Naive thymus-derived CD4-positive, alpha-beta T cell (primary cell): ENCODE measurements at regions of chr12 and their contacts with region 1.

Region 1: DNA sequence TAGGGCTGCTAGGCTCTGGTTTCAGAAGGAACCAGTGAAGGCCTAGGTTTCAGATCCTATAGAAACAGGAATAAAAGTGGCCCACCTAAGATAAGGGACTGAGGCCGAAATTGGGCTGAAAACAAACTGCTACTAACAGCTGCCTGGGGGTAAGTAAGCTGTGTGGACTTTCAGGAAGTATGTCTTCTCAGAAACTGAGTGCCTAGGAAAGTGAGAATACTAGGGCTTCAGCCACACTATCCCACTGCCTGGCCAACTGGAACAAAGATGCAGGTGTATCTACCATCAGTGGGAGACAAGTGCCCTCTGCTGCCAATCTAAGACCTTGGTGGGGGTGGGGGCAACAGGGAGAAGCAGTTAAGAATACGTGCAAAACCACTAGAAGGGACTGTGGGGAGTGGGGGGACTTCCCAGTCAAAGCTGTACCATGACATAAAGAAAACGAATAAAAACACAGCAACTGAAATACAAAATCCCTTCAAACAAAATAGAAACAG is 82.5 kb downstream of the MED13L start:
- DNase-seq: peak; percentile 18 to 86 (median 57)
- ATAC-seq: peak; percentile 95
- H3K4me3 ChIP-seq: no peak overlapping the region
- H3K4me3 Mint-ChIP-seq: peak overlapping the region in 9 of 10 donors; percentile 18 to 62 (median 49)
- H3K27ac ChIP-seq: no peak overlapping the region
- H3K27ac Mint-ChIP-seq: peak overlapping the region; percentile 42 to 78 (median 66)
- H3K4me1 ChIP-seq: peaks cover 7 to 25% of the 10 kb centered on the region in 2 donors
- H3K4me1 Mint-ChIP-seq: peaks cover 34 to 89% (median 73%) of the 10 kb centered on the region in 7 donors
- H3K27me3 ChIP-seq: no peaks in the 10 kb centered on the region
- H3K27me3 Mint-ChIP-seq: no peaks in the 10 kb centered on the region

Region 2: GRCh38 chr12:116015525-116015924 is 179.5 kb before region 1 on chr12:
- CTCF ChIA-PET with region 1: no interaction called
- POLR2A ChIA-PET with region 1: no interaction called
- intact Hi-C with region 1: loop called in 1 of 2 experiments (anchors 5 kb)
- DNase-seq: peak in 4 of 9 donors; percentile 5 to 19 (median 14)
- ATAC-seq: peak; percentile 57
- H3K4me3 ChIP-seq: no peak overlapping the region
- H3K4me3 Mint-ChIP-seq: no peak overlapping the region
- H3K27ac ChIP-seq: no peak overlapping the region
- H3K27ac Mint-ChIP-seq: peak overlapping the region in 5 of 9 donors; percentile 8 to 68 (median 45)
- H3K4me1 ChIP-seq: no peaks in the 10 kb centered on the region
- H3K4me1 Mint-ChIP-seq: peaks cover 0 to 5% (median 4%) of the 10 kb centered on the region in 7 donors
- H3K27me3 ChIP-seq: no peaks in the 10 kb centered on the region
- H3K27me3 Mint-ChIP-seq: no peaks in the 10 kb centered on the region

Region 3: GRCh38 chr12:116066381-116067230 is 128.4 kb before region 1 on chr12:
- CTCF ChIA-PET with region 1: no interaction called
- POLR2A ChIA-PET with region 1: no interaction called
- intact Hi-C with region 1: loop called in 1 of 2 experiments (anchors 2 kb)
- DNase-seq: peak; percentile 18 to 58 (median 49)
- ATAC-seq: peak; percentile 87
- H3K4me3 ChIP-seq: no peak overlapping the region
- H3K4me3 Mint-ChIP-seq: peak overlapping the region in 1 of 10 donors; percentile 14
- H3K27ac ChIP-seq: no peak overlapping the region
- H3K27ac Mint-ChIP-seq: peak overlapping the region in 4 of 9 donors; percentile 3 to 80 (median 10)
- H3K4me1 ChIP-seq: no peaks in the 10 kb centered on the region
- H3K4me1 Mint-ChIP-seq: peaks cover 22 to 72% (median 55%) of the 10 kb centered on the region in 7 donors
- H3K27me3 ChIP-seq: no peaks in the 10 kb centered on the region
- H3K27me3 Mint-ChIP-seq: no peaks in the 10 kb centered on the region

Region 4: DNA sequence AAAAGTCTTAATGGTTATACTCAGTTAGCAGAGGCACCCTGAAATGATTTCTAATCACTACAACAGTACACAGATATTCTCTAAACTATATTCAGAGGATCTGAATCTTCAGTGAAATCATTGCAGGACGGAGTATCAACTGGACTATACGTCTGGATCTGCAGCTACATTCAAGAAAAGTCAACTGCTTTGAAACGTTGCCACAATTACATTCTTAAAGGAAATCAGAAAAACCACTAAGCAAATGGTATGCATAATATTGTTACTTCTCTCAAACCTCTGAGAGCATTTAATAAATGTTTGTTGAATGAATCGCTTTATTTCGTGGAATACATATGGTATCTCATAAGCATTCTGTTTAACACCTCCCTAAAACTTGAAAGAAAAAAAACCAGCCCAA is 15.1 kb after region 1 on chr12:
- CTCF ChIA-PET with region 1: no interaction called
- POLR2A ChIA-PET with region 1: no interaction called
- intact Hi-C with region 1: loop called in 1 of 2 experiments (anchors 2 kb)
- DNase-seq: no peak
- ATAC-seq: no peak
- H3K4me3 ChIP-seq: no peak overlapping the region
- H3K4me3 Mint-ChIP-seq: peak overlapping the region in 5 of 10 donors; percentile 19 to 64 (median 58)
- H3K27ac ChIP-seq: no peak overlapping the region
- H3K27ac Mint-ChIP-seq: peak overlapping the region in 1 of 9 donors; percentile 14
- H3K4me1 ChIP-seq: peaks cover 4 to 22% of the 10 kb centered on the region in 2 donors
- H3K4me1 Mint-ChIP-seq: peaks cover 34 to 94% (median 86%) of the 10 kb centered on the region in 7 donors
- H3K27me3 ChIP-seq: no peaks in the 10 kb centered on the region
- H3K27me3 Mint-ChIP-seq: no peaks in the 10 kb centered on the region

Region 5: GRCh38 chr12:116346741-116347140 is 151.8 kb after region 1 on chr12:
- CTCF ChIA-PET with region 1: no interaction called
- POLR2A ChIA-PET with region 1: no interaction called
- intact Hi-C with region 1: no loop called
- DNase-seq: no peak
- ATAC-seq: no peak
- H3K4me3 ChIP-seq: no peak overlapping the region
- H3K4me3 Mint-ChIP-seq: no peak overlapping the region
- H3K27ac ChIP-seq: no peak overlapping the region
- H3K27ac Mint-ChIP-seq: no peak overlapping the region
- H3K4me1 ChIP-seq: no peaks in the 10 kb centered on the region
- H3K4me1 Mint-ChIP-seq: peaks cover 0 to 5% (median 0%) of the 10 kb centered on the region in 7 donors
- H3K27me3 ChIP-seq: no peaks in the 10 kb centered on the region
- H3K27me3 Mint-ChIP-seq: peaks cover 0 to 12% (median 0%) of the 10 kb centered on the region in 5 donors